Sigmoid colon (tissue), 7 donors: ENCODE measurements at regions of chr10 and their contacts with region 1.

Region 1: DNA sequence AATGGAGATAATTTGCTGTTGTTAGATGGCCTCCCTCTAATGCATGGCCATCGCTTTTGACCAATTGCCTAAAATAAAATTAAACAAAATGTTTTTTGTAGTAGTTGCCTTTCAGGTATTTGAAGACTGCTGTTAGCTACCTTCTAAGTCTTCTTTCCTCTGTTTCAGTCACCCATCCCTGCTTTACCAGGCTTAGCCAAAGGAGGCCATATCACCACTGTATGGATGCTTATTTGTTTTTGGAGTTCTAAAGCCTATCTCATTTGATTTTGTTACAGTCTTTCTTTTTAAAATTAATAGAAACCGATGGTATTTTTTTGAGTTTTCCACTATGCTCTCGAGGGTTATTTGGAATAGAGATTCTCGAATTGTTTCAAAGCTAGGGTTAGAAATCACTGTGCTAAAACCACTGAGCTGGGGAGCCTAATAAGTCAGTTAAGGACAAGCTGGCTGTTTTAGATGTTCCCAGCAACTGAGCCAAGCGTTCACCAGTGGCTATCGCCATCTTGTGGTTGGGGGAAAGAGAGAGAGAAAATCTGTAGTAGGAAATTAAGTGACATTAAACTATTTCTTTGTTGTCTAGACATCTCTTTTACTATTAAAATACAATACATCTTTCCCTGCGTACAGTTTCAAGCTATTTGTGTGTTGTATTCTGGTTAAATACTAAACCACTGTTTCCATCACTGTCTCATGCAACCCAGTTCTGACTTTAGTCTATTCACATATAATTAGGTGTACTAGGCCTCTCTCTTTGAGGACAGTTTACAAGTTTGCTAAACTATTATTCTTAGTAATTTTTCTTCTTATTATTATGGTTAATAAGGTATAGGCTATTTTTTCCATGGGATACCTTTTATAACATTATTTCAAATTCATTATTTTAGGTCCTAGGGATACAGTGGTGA is 52.2 kb downstream of the GPR158 start:
- DNase-seq: no peak
- H3K4me3 ChIP-seq: no peak overlapping the region
- H3K27ac ChIP-seq: no peak overlapping the region
- H3K4me1 ChIP-seq: no peaks in the 10 kb centered on the region
- H3K27me3 ChIP-seq: no peaks in the 10 kb centered on the region
- CTCF ChIP-seq: peak in 2 of 4 experiments; percentile 10 to 42
- EP300 ChIP-seq: no peak
- POLR2A ChIP-seq: no peak

Region 2: DNA sequence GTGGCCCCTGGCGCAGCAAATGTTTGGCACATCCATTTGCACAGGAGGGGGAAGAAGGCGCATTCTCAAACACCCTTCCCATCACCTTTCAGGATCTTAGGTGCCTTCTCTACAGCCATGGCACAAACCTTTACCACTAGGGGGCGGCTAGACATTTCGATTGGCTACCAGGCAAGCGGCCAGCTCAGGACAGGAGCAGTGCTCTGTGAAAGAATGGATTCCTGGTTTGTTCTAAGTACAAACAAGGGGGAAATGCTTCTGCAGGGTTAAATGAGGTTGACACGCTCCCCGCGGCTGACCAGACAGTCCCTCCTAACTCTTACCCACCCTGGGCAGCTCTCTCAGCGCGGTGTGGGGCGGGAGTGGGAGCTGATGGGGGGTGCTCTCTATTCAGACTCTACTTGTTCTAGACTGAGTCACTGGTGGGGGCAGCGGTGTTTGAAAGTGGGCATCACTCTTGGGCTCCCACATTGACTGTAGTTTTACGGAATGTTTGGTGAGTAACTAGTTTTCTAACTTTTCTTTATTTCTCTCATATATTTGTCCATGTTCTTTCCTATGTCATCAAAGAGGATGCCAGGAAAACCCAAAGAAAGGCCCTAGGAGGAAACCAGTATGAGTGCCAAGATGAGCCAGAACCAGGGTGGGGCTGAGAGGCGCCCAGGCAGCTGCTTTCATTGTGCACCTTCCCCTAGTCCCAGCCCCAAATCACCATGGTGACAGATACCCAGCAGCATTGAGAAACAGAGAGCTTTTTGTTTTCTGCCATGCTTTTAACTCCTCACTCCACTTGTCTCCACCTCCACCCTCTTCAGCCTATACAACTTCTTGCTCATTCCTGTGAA is 113.6 kb before region 1 on chr10:
- intact Hi-C with region 1: loop called (anchors 2 kb)
- DNase-seq: peak; percentile 73
- H3K4me3 ChIP-seq: no peak overlapping the region
- H3K27ac ChIP-seq: no peak overlapping the region
- H3K4me1 ChIP-seq: peaks cover 0 to 7% (median 2%) of the 10 kb centered on the region in 4 donors
- H3K27me3 ChIP-seq: no peaks in the 10 kb centered on the region
- CTCF ChIP-seq: peak in 3 of 4 experiments; percentile 30 to 69 (median 46)
- EP300 ChIP-seq: no peak
- POLR2A ChIP-seq: no peak

Region 3: DNA sequence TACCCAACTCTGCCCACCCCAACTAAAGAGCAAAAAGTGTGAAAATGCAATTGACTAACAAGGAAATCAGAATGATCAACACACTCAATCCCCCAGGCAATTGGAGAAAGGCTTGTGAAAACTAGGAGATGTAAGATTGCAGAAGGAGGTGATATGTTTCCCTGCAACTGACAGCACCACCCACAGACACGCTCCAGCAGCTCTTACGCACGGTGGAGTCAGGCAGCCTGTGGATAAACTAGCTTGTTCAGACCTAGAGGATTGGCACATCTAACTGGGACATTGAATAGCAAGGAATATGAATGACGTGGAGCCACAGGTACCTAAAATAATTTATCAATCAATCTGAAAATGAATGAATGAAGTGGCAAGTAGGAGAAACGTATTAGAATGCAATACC is 581.3 kb after region 1 on chr10:
- intact Hi-C with region 1: no loop called
- DNase-seq: no peak
- H3K4me3 ChIP-seq: no peak overlapping the region
- H3K27ac ChIP-seq: no peak overlapping the region
- H3K4me1 ChIP-seq: no peaks in the 10 kb centered on the region
- H3K27me3 ChIP-seq: no peaks in the 10 kb centered on the region
- CTCF ChIP-seq: no peak
- EP300 ChIP-seq: no peak
- POLR2A ChIP-seq: no peak